Left colon (tissue), 2 donors: ENCODE measurements at regions of chr7 and their contacts with region 1.

Region 1: GRCh38 chr7:106736508-106737201 is 75.7 kb upstream of the CCDC71L start:
- DNase-seq: no peak
- ATAC-seq: peak; percentile 97

Region 2: DNA sequence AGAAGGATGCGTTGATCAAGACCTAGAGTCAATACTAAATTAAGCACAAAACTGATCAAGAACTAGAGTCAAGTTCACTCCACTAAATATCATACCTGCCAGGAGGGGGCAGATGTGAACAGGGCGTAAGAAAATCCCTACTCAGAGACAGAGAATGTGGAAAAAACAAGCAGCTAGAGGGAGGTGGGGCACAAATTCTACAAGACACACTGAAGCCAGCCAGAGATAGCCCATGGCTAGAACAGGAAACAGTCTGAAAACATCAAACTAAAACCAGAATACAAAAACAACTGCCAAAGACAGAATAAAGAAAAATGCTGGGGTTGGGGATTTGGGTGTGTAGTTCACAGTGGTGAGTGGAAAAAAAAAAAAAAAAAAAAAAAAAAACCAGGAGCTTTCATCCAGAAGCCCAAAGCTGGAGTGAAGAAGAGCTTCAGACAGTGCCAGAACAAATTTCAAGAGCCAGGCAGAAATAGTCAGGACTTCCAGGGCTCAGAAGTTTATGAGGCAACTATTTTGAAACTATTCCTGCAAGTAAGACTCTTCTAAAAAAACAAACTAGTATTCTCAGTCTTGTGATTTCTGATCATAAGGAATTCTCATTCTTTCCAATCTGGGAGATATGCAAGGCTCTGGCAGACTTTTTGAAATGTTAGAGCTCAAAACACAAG is 194.0 kb before region 1 on chr7:
- intact Hi-C with region 1: loop called in 1 of 2 experiments (anchors 10 kb)
- DNase-seq: peak; percentile 57 to 73
- ATAC-seq: peak; percentile 100

Region 3: GRCh38 chr7:106659963-106660861 is 76.4 kb before region 1 on chr7:
- intact Hi-C with region 1: loop called in 1 of 2 experiments (anchors 10 kb)
- DNase-seq: peak; percentile 78 to 91
- ATAC-seq: peak; percentile 82